PC-3 (cell line): ENCODE measurements at regions of chr16 and their contacts with region 1.

Region 1: GRCh38 chr16:88442727-88443576 is 10.1 kb upstream of the ZFPM1 start:
- DNase-seq: peak; percentile 81
- ATAC-seq: peak; percentile 87
- H3K4me3 ChIP-seq: peak overlapping the region; percentile 40; the same call in 1 of the 2 replicates
- H3K27ac ChIP-seq: no peak overlapping the region
- H3K4me1 ChIP-seq: peaks cover 9% of the 10 kb centered on the region; the same call in 1 of the 2 replicates
- H3K27me3 ChIP-seq: no peaks in the 10 kb centered on the region
- CTCF ChIP-seq: peak; percentile 81

Region 2: GRCh38 chr16:87853411-87854052 is 589.4 kb before region 1 on chr16:
- CTCF ChIA-PET with region 1: no interaction called
- POLR2A ChIA-PET with region 1: no interaction called
- intact Hi-C with region 1: no loop called
- DNase-seq: peak; percentile 81
- ATAC-seq: peak; percentile 30
- H3K4me3 ChIP-seq: peak overlapping the region; percentile 50; the same call in 1 of the 2 replicates
- H3K27ac ChIP-seq: peak overlapping the region; percentile 95
- H3K4me1 ChIP-seq: peaks cover 42% of the 10 kb centered on the region
- H3K27me3 ChIP-seq: no peaks in the 10 kb centered on the region
- CTCF ChIP-seq: no peak

Region 3: DNA sequence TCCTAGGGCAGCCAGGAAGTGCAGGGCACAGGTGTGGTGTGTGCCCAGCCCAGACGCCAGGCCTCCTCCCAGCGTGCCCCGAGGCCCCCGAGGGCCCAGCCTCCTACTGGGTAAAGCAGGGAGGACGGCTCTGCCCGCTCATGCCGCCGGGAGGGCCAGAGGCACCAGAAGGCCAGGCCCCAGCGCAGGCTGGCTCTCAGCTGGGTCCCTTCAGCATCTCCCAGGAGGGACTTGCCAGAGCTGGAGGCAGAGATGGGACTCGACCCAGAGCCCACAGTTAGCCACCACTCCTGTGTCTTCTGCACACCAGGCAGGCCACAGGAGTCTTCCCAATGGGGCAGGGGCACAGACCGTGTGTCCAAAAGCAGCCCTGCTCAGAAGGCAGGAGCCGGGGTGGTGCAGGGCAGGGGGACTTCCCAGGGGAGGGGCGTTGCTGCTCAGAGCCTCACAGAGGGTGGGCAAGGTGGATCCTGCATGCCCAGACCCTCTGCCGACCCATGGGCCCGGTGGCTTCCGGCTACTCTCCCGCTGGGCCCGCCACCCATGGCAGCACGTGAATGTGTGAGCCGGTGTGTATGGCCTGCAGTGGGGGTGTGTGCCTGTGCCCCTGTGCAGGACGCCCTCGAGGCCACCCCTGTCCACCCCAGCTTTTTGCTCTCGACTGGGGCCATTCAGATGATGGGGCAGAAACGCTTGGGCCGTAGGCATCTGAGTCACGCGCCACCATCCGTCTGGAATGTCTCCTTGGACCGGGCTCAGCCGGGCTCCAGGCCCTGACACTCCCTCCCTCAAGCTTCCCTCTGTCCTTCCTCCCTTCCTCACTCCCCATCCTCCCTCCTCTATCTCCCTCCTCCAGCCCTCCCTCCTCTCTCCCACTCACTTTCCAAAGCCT is 65.9 kb before region 1 on chr16:
- CTCF ChIA-PET with region 1: no interaction called
- POLR2A ChIA-PET with region 1: no interaction called
- intact Hi-C with region 1: no loop called
- DNase-seq: no peak
- ATAC-seq: no peak; the same call in 1 of the 2 replicates
- H3K4me3 ChIP-seq: no peak overlapping the region
- H3K27ac ChIP-seq: no peak overlapping the region
- H3K4me1 ChIP-seq: no peaks in the 10 kb centered on the region
- H3K27me3 ChIP-seq: no peaks in the 10 kb centered on the region
- CTCF ChIP-seq: no peak

Region 4: GRCh38 chr16:88468275-88469141 is 25.6 kb after region 1 on chr16:
- CTCF ChIA-PET with region 1: no interaction called
- POLR2A ChIA-PET with region 1: no interaction called
- intact Hi-C with region 1: no loop called
- DNase-seq: peak; percentile 36
- ATAC-seq: peak; percentile 37; the same call in 1 of the 2 replicates
- H3K4me3 ChIP-seq: no peak overlapping the region
- H3K27ac ChIP-seq: no peak overlapping the region
- H3K4me1 ChIP-seq: no peaks in the 10 kb centered on the region
- H3K27me3 ChIP-seq: no peaks in the 10 kb centered on the region
- CTCF ChIP-seq: no peak

Region 5: GRCh38 chr16:88527186-88527936 is 84.4 kb after region 1 on chr16:
- CTCF ChIA-PET with region 1: no interaction called
- POLR2A ChIA-PET with region 1: no interaction called
- intact Hi-C with region 1: loop called (anchors 10 kb)
- DNase-seq: peak; percentile 21
- ATAC-seq: peak; percentile 40; the same call in 1 of the 2 replicates
- H3K4me3 ChIP-seq: no peak overlapping the region
- H3K27ac ChIP-seq: no peak overlapping the region
- H3K4me1 ChIP-seq: no peaks in the 10 kb centered on the region
- H3K27me3 ChIP-seq: no peaks in the 10 kb centered on the region
- CTCF ChIP-seq: peak; percentile 64

Region 6: DNA sequence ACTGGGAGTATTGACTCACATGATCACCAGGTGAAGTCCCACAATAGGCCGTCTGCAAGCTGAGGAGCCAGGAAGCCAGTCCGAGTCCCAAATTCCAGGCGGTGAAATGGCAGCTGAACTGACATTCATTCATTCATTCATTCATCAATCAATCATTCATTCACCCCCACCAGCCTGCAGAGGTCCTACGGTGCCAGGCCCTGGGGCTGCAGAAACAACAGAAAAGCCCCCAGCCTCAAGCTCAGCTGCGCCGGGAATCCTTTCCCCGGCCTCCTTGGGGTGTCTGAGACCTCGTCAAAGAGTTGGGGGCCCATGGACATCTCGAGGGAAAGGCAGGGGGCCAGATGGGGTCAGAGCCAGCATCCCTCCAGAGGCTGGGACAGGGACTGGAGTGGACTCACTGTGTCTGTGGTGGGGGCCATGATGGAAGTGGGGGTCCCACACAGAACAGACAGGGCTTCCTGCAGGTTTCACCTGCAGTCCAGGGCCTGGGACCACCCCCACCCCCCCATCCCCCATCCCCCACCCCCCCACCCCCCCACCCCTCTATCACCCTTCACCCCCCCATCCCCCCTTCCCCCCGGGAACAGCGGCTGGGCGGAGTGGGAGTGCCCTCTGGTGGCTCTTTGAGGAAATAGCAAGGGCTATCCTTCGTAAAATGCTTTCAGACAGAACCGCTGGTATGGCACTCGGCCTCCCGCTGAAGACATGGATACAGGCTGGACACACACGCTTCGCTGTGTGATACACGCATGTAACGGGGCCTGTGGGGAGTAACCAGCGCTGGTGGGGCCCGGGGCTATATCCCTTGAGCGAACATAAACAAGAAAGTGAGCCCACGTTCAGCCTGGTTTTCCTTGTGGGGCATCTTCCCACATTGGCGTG is 118.8 kb after region 1 on chr16:
- CTCF ChIA-PET with region 1: no interaction called
- POLR2A ChIA-PET with region 1: no interaction called
- intact Hi-C with region 1: loop called (anchors 2 kb)
- DNase-seq: peak; percentile 48
- ATAC-seq: peak; percentile 67
- H3K4me3 ChIP-seq: peak overlapping the region; percentile 58
- H3K27ac ChIP-seq: no peak overlapping the region
- H3K4me1 ChIP-seq: no peaks in the 10 kb centered on the region; the same call in 1 of the 2 replicates
- H3K27me3 ChIP-seq: no peaks in the 10 kb centered on the region
- CTCF ChIP-seq: peak; percentile 49